Activated CD4-positive, alpha-beta T cell treated with anti-CD3 and anti-CD28 coated beads, Interleukin-2, amount 10 ng/mL, durations not matched to agents 24 days and 14 days (primary cell): ENCODE measurements at regions of chr7 and their contacts with region 1.

Region 1: DNA sequence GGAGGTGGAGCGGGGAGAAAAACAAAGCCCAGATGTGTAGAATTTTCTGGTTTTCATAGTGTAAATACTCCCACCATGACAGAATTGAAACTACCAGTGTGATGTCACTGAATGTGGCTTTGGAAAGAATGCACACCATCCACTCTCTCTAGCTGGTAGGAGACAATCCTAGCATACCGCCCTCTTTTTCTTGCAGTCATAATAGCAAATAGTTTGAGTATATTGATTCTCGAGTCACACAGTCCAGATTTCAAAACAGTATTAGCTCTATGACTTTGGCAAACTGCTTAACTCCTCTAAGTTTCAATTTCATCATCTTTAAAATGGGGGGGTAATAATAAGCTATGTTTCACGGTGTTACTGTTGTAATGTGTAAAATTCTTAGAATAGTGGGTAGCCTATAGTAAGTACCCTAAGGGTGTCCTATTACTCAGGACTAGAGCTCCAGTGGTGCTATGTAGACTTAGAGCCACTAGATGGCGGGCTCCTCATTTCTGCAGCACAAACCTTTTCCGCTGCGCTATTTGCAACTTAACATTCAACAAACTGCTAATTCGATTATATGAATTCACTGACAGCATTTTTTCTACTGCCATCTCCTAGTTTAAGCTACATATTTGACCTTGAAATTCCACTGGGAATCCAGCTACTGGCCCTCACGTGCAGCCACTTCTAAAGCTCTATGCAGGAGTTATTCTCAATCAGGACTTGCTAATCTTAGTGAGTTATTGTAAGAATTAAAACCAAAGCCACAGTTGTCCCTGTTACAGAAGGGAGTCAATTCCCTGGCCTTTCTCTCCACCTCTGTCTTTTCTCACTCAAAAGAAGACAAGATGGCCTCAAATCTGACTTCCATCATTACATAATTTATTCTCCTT is 18.7 kb downstream of the TAS2R40 start:
- DNase-seq: peak; percentile 92
- H3K4me3 Mint-ChIP-seq: peak overlapping the region; percentile 11
- H3K27ac Mint-ChIP-seq: peak overlapping the region; percentile 82
- H3K4me1 Mint-ChIP-seq: peaks cover 44% of the 10 kb centered on the region
- H3K27me3 Mint-ChIP-seq: peaks cover 15% of the 10 kb centered on the region

Region 2: GRCh38 chr7:143222782-143223181 is 17.7 kb before region 1 on chr7:
- intact Hi-C with region 1: no loop called
- DNase-seq: no peak
- H3K4me3 Mint-ChIP-seq: no peak overlapping the region
- H3K27ac Mint-ChIP-seq: no peak overlapping the region
- H3K4me1 Mint-ChIP-seq: no peaks in the 10 kb centered on the region
- H3K27me3 Mint-ChIP-seq: peaks cover 44% of the 10 kb centered on the region

Region 3: DNA sequence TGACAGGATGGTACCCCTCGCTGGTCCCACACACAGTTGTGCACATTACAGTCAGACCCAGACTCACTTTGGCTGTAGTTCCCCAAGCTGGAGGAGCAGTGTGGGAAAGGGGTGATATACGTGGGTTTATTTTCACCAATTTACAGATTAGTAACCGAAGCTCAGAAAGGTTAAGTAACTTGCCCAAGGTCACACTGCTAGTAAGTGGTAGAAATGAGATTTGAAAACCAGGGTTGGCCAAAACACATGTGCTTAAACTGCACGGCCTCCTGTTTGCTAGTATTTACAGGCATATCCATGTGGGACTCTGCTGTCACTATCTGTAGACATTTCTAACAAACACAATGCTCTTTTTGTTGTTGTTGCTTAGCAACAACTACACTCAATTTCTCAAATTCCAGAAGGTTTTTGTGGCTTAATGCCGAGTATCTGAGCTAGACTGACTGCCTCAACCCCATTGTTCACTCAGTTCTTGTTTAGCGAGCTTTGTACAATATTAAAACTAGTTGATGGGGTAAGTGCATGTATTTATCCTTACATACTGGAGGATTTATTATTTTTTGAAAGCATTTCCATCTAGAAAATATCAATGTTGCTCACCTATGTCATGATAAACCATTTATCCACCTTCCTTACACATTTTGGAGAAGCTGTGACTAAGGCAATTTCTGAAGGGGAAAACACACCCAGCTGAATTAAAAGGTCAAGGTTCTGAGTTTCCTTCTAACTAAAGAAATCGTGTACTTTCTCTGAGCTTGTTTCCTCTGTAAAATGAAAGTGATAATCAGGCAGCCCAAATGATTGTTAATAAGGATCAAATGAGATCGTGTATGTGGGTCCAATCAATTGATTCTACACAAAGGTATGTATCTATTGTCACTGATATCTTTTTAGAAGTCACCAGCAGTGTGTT is 38.9 kb after region 1 on chr7:
- intact Hi-C with region 1: loop called (anchors 1 kb)
- DNase-seq: peak; percentile 69
- H3K4me3 Mint-ChIP-seq: peak overlapping the region; percentile 85
- H3K27ac Mint-ChIP-seq: peak overlapping the region; percentile 96
- H3K4me1 Mint-ChIP-seq: peaks cover 40% of the 10 kb centered on the region
- H3K27me3 Mint-ChIP-seq: no peaks in the 10 kb centered on the region

Region 4: GRCh38 chr7:143299840-143300239 is 59.3 kb after region 1 on chr7:
- intact Hi-C with region 1: loop called (anchors 1 kb)
- DNase-seq: peak; percentile 90
- H3K4me3 Mint-ChIP-seq: no peak overlapping the region
- H3K27ac Mint-ChIP-seq: no peak overlapping the region
- H3K4me1 Mint-ChIP-seq: peaks cover 65% of the 10 kb centered on the region
- H3K27me3 Mint-ChIP-seq: no peaks in the 10 kb centered on the region

Region 5: GRCh38 chr7:143345428-143345900 is 104.9 kb after region 1 on chr7:
- intact Hi-C with region 1: loop called (anchors 1 kb)
- DNase-seq: peak; percentile 90
- H3K4me3 Mint-ChIP-seq: peak overlapping the region; percentile 77
- H3K27ac Mint-ChIP-seq: peak overlapping the region; percentile 52
- H3K4me1 Mint-ChIP-seq: peaks cover 18% of the 10 kb centered on the region
- H3K27me3 Mint-ChIP-seq: peaks cover 50% of the 10 kb centered on the region

Region 6: GRCh38 chr7:143416565-143417149 is 176.1 kb after region 1 on chr7:
- intact Hi-C with region 1: loop called (anchors 1 kb)
- DNase-seq: peak; percentile 80
- H3K4me3 Mint-ChIP-seq: no peak overlapping the region
- H3K27ac Mint-ChIP-seq: no peak overlapping the region
- H3K4me1 Mint-ChIP-seq: peaks cover 2% of the 10 kb centered on the region
- H3K27me3 Mint-ChIP-seq: peaks cover 16% of the 10 kb centered on the region

Region 7: DNA sequence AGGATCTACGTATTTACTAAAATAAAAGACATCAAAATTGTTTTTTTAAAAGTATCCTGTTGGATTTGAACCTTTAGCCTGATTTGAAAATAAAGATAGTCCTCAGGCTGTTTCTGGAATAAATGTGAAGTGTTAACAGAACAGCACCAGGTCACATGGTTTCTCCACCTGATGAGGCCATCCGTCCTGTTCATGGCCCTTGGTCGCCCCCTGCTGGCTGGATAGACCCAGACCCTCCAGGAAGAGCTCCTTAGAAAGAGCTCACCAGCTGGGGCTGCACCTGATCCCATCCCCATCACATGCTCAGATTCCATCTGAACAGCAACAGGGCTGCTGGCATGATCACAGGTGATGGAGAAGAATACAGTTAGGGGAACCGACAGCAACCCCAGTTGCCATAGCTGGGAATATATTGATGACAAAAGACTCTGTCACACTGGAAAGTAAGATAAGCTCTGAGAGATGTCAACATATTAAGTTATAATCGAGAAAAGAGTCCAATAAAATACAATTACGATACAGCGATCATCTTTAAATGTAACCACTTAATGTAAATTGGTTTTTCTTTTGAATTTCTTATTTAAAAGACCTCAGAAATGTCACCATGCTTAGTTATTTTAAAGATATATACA is 887.3 kb after region 1 on chr7:
- intact Hi-C with region 1: loop called (anchors 5 kb)
- DNase-seq: peak; percentile 95
- H3K4me3 Mint-ChIP-seq: no peak overlapping the region
- H3K27ac Mint-ChIP-seq: no peak overlapping the region
- H3K4me1 Mint-ChIP-seq: no peaks in the 10 kb centered on the region
- H3K27me3 Mint-ChIP-seq: peaks cover 2% of the 10 kb centered on the region